Psoas muscle (tissue), 8 donors: ENCODE measurements at regions of chr7 and their contacts with region 1.

Region 1: DNA sequence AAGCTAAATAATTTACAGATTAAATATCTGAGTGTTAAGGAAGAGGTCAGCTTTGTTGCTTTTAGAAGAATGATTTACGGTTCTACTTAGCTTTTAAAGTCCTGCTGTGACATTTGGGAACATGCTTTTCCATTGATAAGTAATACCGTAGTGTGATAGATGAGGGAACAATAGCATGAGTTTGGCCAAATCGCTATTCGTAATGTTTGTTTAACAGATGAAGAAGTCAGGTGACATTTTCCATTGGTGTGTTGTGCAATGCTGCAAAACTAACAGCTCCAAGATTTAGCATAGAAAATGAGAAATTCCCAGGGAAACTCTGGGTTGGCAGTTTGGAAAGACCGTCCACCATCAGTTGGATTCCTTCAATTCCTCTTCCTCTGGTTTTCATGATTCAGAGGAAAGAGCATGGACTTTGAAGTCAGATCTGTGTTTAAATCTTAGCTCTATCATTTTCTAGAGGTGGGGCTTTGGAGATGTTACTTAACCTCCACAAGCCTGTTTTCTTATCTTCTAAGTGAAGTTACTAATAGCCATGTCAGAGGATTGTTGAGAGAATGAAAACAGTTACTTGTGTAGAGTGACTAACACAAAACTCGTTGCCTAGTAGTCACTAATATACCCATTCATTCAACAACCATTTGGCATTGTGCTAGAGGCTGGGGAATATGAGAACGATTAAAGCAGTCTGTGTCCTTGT is 140.4 kb upstream of the BMPER start:
- DNase-seq: no peak
- ATAC-seq: no peak
- H3K4me3 ChIP-seq: no peak overlapping the region
- H3K27ac ChIP-seq: no peak overlapping the region
- H3K4me1 ChIP-seq: peaks cover 8% of the 10 kb centered on the region
- H3K27me3 ChIP-seq: no peaks in the 10 kb centered on the region
- CTCF ChIP-seq: no peak

Region 2: GRCh38 chr7:33807779-33808482 is 43.0 kb after region 1 on chr7:
- intact Hi-C with region 1: loop called in 1 of 2 experiments (anchors 5 kb)
- DNase-seq: no peak
- ATAC-seq: peak in 1 of 4 donors; percentile 17
- H3K4me3 ChIP-seq: no peak overlapping the region
- H3K27ac ChIP-seq: peak overlapping the region; percentile 21
- H3K4me1 ChIP-seq: peaks cover 15% of the 10 kb centered on the region
- H3K27me3 ChIP-seq: no peaks in the 10 kb centered on the region
- CTCF ChIP-seq: no peak